H1 (cell line): ENCODE measurements at regions of chr15 and their contacts with region 1.

Region 1: GRCh38 chr15:57580866-57581265 is 10.8 kb upstream of the MYZAP start:
- DNase-seq: no peak
- H3K4me3 ChIP-seq: no peak overlapping the region
- H3K27ac ChIP-seq: no peak overlapping the region
- H3K4me1 ChIP-seq: no peaks in the 10 kb centered on the region
- H3K27me3 ChIP-seq: no peaks in the 10 kb centered on the region
- CTCF ChIP-seq: peak in 2 of 3 experiments; percentile 1 to 25; a peak in 1 of 4 replicates
- EP300 ChIP-seq: no peak
- POLR2A ChIP-seq: no peak
- RAD21 ChIP-seq: no peak; a peak in 1 of 4 replicates

Region 2: GRCh38 chr15:57591646-57592367 is 10.9 kb after region 1 on chr15 and contains the start of gene MYZAP:
- CTCF ChIA-PET with region 1: interaction called, 19 read pairs
- POLR2A ChIA-PET with region 1: interaction called, 3 read pairs
- DNase-seq: peak in 1 of 2 experiments; percentile 74
- H3K4me3 ChIP-seq: peak within 1 kb of the TSS; percentile 64 to 80 (median 73)
- H3K27ac ChIP-seq: no peak within 1 kb of the TSS
- H3K4me1 ChIP-seq: peaks cover 4 to 7% (median 4%) of the 10 kb centered on the region in 4 experiments; a peak in 6 of 7 replicates
- H3K27me3 ChIP-seq: peaks cover 0 to 18% (median 10%) of the 10 kb centered on the region in 4 experiments; a peak in 4 of 7 replicates
- CTCF ChIP-seq: no peak
- EP300 ChIP-seq: no peak
- POLR2A ChIP-seq: no peak
- RAD21 ChIP-seq: no peak
- total RNA-seq, gene MYZAP: 0.65 and 0.94 TPM in 2 replicates